Calu3 (cell line): ENCODE measurements at regions of chr18 and their contacts with region 1.

Region 1: GRCh38 chr18:69659142-69659651 is 258.5 kb downstream of the DOK6 start:
- DNase-seq: no peak
- H3K4me3 Mint-ChIP-seq: no peak overlapping the region
- H3K27ac Mint-ChIP-seq: no peak overlapping the region
- H3K4me1 Mint-ChIP-seq: no peaks in the 10 kb centered on the region
- H3K27me3 Mint-ChIP-seq: no peaks in the 10 kb centered on the region
- CTCF ChIP-seq: no peak

Region 2: GRCh38 chr18:69330370-69331005 is 328.7 kb before region 1 on chr18:
- CTCF ChIA-PET with region 1: no interaction called
- intact Hi-C with region 1: no loop called
- DNase-seq: no peak
- H3K4me3 Mint-ChIP-seq: no peak overlapping the region
- H3K27ac Mint-ChIP-seq: no peak overlapping the region
- H3K4me1 Mint-ChIP-seq: peaks cover 20% of the 10 kb centered on the region
- H3K27me3 Mint-ChIP-seq: no peaks in the 10 kb centered on the region
- CTCF ChIP-seq: no peak

Region 3: GRCh38 chr18:69531973-69532372 is 127.2 kb before region 1 on chr18:
- CTCF ChIA-PET with region 1: no interaction called
- intact Hi-C with region 1: no loop called
- DNase-seq: no peak
- H3K4me3 Mint-ChIP-seq: no peak overlapping the region
- H3K27ac Mint-ChIP-seq: no peak overlapping the region
- H3K4me1 Mint-ChIP-seq: no peaks in the 10 kb centered on the region
- H3K27me3 Mint-ChIP-seq: no peaks in the 10 kb centered on the region
- CTCF ChIP-seq: no peak

Region 4: DNA sequence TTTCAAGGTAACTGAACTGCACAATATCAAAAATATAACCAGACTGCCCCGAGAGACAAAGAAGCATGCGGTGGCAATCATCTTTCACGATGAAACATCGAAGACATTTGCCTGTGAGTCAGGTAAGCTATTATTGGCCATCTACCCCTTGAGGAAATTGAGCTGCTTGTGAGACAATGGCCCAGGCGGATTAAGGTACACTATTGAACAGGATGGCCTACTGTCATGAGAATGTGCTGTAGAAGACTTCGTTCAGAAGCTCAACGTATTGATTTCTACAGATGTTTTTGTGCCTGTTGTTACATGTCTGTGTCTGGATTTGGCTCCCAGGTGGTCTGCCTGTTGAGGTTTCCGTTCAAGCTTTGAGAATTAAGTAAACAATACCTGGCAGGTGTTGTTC is 59.8 kb before region 1 on chr18:
- CTCF ChIA-PET with region 1: no interaction called
- intact Hi-C with region 1: no loop called
- DNase-seq: no peak
- H3K4me3 Mint-ChIP-seq: no peak overlapping the region
- H3K27ac Mint-ChIP-seq: no peak overlapping the region
- H3K4me1 Mint-ChIP-seq: no peaks in the 10 kb centered on the region
- H3K27me3 Mint-ChIP-seq: no peaks in the 10 kb centered on the region
- CTCF ChIP-seq: no peak

Region 5: GRCh38 chr18:69622184-69622583 is 37.0 kb before region 1 on chr18:
- CTCF ChIA-PET with region 1: no interaction called
- intact Hi-C with region 1: loop called (anchors 1 kb)
- DNase-seq: no peak
- H3K4me3 Mint-ChIP-seq: no peak overlapping the region
- H3K27ac Mint-ChIP-seq: no peak overlapping the region
- H3K4me1 Mint-ChIP-seq: no peaks in the 10 kb centered on the region
- H3K27me3 Mint-ChIP-seq: no peaks in the 10 kb centered on the region
- CTCF ChIP-seq: no peak

Region 6: DNA sequence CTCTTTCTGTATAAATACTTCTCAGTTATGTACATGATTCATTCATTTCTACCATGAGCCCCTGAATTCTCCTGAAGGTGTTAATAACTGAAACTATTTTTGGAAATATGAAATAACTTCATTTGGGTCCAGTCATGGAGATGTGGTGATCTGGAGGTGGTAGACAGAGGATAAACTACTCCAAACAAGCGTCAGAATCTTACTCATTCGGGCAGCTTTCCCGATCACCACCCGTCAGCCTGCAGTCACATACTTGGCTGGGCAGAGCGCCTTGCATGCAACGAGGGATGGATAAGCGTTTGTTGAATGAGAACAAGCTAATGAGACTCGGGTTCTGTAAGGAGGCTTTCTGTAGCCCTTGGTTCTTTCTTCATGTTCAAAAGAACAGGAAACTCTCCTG is 65.8 kb after region 1 on chr18:
- CTCF ChIA-PET with region 1: no interaction called
- intact Hi-C with region 1: no loop called
- DNase-seq: no peak
- H3K4me3 Mint-ChIP-seq: no peak overlapping the region
- H3K27ac Mint-ChIP-seq: no peak overlapping the region
- H3K4me1 Mint-ChIP-seq: no peaks in the 10 kb centered on the region
- H3K27me3 Mint-ChIP-seq: no peaks in the 10 kb centered on the region
- CTCF ChIP-seq: no peak